ENCODE measurements at regions of chr11 and their contacts with region 1.

Region 1: DNA sequence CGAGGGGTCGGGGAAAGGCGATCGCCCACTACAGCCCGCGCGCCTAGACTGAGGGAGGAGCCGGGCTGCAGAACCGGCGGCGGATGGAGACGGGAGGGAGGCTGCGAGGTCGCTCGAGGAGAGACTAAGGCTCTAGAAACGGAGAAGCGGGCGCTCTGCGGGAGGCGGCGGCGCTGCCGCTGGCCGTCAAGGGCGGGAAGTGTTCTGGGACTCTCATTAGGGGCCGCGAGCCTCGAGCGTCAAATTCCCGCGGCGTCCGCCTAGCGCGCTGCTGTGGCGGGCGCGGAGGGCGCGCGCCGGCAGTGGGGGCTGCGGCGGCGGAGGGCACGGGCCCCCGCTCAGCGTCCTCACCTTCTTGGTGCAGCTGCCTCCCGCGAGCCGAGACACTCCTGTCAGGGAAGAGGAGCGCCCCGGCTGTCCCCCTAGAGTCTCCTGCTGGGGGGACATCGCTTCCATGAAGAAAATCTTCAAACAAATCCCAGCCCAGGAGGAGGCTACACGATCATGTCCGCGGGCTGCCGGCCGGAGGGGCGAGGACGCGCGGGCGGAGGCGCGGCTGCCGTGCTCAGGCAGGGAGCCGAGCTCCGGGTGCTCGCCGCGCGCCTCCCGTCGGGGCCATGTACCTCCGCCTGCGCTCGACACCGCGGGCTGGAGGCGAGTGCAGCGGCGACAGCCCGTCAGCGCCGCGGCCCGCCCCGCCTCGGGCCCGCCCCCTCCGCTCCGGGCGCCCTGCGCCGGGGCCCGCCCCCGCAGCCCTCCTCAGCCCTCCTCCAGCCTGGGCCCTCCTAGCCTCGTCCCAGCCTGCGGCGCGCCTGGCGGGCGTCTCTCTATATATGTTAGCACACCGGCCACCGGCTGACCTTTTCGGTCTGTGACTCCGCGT is at the start of gene ARHGAP20:
- DNase-seq: peak; percentile 71
- ATAC-seq: peak; percentile 91
- H3K4me3 ChIP-seq: peak within 1 kb of the TSS; percentile 69
- H3K27ac ChIP-seq: peak within 1 kb of the TSS; percentile 81
- H3K4me1 ChIP-seq: peaks cover 6% of the 10 kb centered on the region
- H3K27me3 ChIP-seq: no peaks in the 10 kb centered on the region
- CTCF ChIP-seq: no peak
- POLR2A ChIP-seq: no peak
- RAD21 ChIP-seq: peak; percentile 10; the same call in 1 of the 2 replicates
- total RNA-seq, gene ARHGAP20: 2.5 and 2.8 TPM in 2 replicates

Region 2: GRCh38 chr11:110463153-110463552 is 248.9 kb before region 1 on chr11:
- CTCF ChIA-PET with region 1: no interaction called
- POLR2A ChIA-PET with region 1: no interaction called
- dilution Hi-C with region 1: no loop called
- in situ Hi-C with region 1: loop called (anchors 25 kb)
- intact Hi-C with region 1: loop called (anchors 1 kb)
- DNase-seq: peak; percentile 66
- ATAC-seq: peak; percentile 96
- H3K4me3 ChIP-seq: no peak overlapping the region
- H3K27ac ChIP-seq: no peak overlapping the region
- H3K4me1 ChIP-seq: no peaks in the 10 kb centered on the region
- H3K27me3 ChIP-seq: no peaks in the 10 kb centered on the region
- CTCF ChIP-seq: peak; percentile 59
- POLR2A ChIP-seq: no peak
- RAD21 ChIP-seq: peak; percentile 83

Region 3: GRCh38 chr11:110763249-110764011 is 51.4 kb after region 1 on chr11:
- CTCF ChIA-PET with region 1: no interaction called
- POLR2A ChIA-PET with region 1: no interaction called
- dilution Hi-C with region 1: no loop called
- in situ Hi-C with region 1: no loop called
- intact Hi-C with region 1: loop called (anchors 2 kb)
- DNase-seq: peak; percentile 80
- ATAC-seq: peak; percentile 52
- H3K4me3 ChIP-seq: no peak overlapping the region
- H3K27ac ChIP-seq: peak overlapping the region; percentile 86; the same call in 1 of the 2 replicates
- H3K4me1 ChIP-seq: peaks cover 11% of the 10 kb centered on the region
- H3K27me3 ChIP-seq: no peaks in the 10 kb centered on the region
- CTCF ChIP-seq: no peak
- POLR2A ChIP-seq: no peak
- RAD21 ChIP-seq: no peak

Region 4: GRCh38 chr11:110907629-110908028 is 195.6 kb after region 1 on chr11:
- CTCF ChIA-PET with region 1: no interaction called
- POLR2A ChIA-PET with region 1: no interaction called
- dilution Hi-C with region 1: no loop called
- in situ Hi-C with region 1: no loop called
- intact Hi-C with region 1: loop called (anchors 5 kb)
- DNase-seq: peak; percentile 98
- ATAC-seq: peak; percentile 71
- H3K4me3 ChIP-seq: no peak overlapping the region
- H3K27ac ChIP-seq: no peak overlapping the region
- H3K4me1 ChIP-seq: peaks cover 10% of the 10 kb centered on the region
- H3K27me3 ChIP-seq: 0 out of 2 replicates have a peak, but pooled peaks cover 2% of the 10 kb centered on the region
- CTCF ChIP-seq: no peak
- POLR2A ChIP-seq: no peak
- RAD21 ChIP-seq: no peak

Region 5: GRCh38 chr11:111001986-111002611 is 290.1 kb after region 1 on chr11:
- CTCF ChIA-PET with region 1: no interaction called
- POLR2A ChIA-PET with region 1: no interaction called
- dilution Hi-C with region 1: no loop called
- in situ Hi-C with region 1: no loop called
- intact Hi-C with region 1: loop called (anchors 5 kb)
- DNase-seq: peak; percentile 95
- ATAC-seq: peak; percentile 70
- H3K4me3 ChIP-seq: no peak overlapping the region
- H3K27ac ChIP-seq: peak overlapping the region; percentile 37; the same call in 1 of the 2 replicates
- H3K4me1 ChIP-seq: peaks cover 8% of the 10 kb centered on the region
- H3K27me3 ChIP-seq: no peaks in the 10 kb centered on the region
- CTCF ChIP-seq: no peak
- POLR2A ChIP-seq: no peak
- RAD21 ChIP-seq: no peak

Region 6: GRCh38 chr11:111283945-111284481 is 572.0 kb after region 1 on chr11:
- CTCF ChIA-PET with region 1: no interaction called
- POLR2A ChIA-PET with region 1: no interaction called
- dilution Hi-C with region 1: no loop called
- in situ Hi-C with region 1: no loop called
- intact Hi-C with region 1: loop called (anchors 2 kb)
- DNase-seq: peak; percentile 51
- ATAC-seq: no peak
- H3K4me3 ChIP-seq: no peak overlapping the region
- H3K27ac ChIP-seq: no peak overlapping the region
- H3K4me1 ChIP-seq: no peaks in the 10 kb centered on the region
- H3K27me3 ChIP-seq: peaks cover 26% of the 10 kb centered on the region
- CTCF ChIP-seq: no peak
- POLR2A ChIP-seq: no peak
- RAD21 ChIP-seq: no peak

Measured in IMR-90 (cell line).